Activated B cell treated with CpG ODN at 0.5 μM for 24 hours (primary cell): ENCODE measurements at regions of chr20 and their contacts with region 1.

Region 1: GRCh38 chr20:37384683-37385174 is 38.8 kb downstream of the SRC start:
- DNase-seq: peak; percentile 87
- ATAC-seq: peak; percentile 59
- H3K4me3 Mint-ChIP-seq: peak overlapping the region; percentile 80
- H3K27ac Mint-ChIP-seq: peak overlapping the region; percentile 82
- H3K4me1 Mint-ChIP-seq: peaks cover 47% of the 10 kb centered on the region
- H3K27me3 Mint-ChIP-seq: no peaks in the 10 kb centered on the region
- CTCF ChIP-seq: peak; percentile 77

Region 2: GRCh38 chr20:37202267-37202943 is 182.3 kb before region 1 on chr20:
- CTCF ChIA-PET with region 1: interaction called, 4 read pairs
- POLR2A ChIA-PET with region 1: no interaction called
- intact Hi-C with region 1: loop called (anchors 2 kb)
- DNase-seq: no peak
- ATAC-seq: no peak
- H3K4me3 Mint-ChIP-seq: no peak overlapping the region
- H3K27ac Mint-ChIP-seq: no peak overlapping the region
- H3K4me1 Mint-ChIP-seq: no peaks in the 10 kb centered on the region
- H3K27me3 Mint-ChIP-seq: no peaks in the 10 kb centered on the region
- CTCF ChIP-seq: peak; percentile 66

Region 3: DNA sequence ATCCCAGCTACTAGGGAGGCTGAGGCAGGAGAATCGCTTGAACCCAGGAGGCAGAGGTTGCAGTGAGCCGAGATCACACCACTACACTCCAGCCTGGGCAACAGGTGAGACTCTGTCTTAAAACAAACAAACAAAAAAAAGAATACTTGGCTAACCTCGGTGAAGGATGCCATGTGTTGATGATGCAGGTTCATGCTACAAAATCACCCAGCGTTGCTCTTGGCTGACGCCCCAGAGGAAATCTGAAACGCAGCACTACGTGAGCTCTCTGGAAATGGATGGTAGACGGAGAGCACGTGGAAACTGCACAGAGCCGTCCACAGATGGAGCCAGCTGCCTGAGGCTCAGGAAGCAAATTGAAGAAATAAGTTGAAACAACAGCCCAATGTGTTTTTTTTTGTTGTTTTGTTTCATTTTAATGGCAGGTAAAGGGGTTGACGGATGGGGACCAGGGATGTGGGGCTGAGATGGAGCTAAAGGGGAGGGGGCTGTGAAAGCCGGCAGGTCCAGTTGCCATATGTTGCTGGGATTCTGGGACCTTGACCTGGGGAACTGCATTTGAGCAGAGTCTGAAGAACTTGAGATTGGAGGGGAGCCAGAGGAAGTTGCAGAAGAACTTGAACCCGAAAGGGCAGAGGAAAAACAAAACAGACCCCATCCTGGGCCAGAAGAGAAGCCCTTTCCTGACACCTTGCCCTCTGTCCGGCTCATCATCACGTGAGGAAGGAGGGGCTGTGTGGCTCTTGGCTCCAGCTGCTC is 108.1 kb before region 1 on chr20:
- CTCF ChIA-PET with region 1: interaction called, 59 read pairs
- POLR2A ChIA-PET with region 1: interaction called, 8 read pairs
- intact Hi-C with region 1: no loop called
- DNase-seq: no peak
- ATAC-seq: peak; percentile 69
- H3K4me3 Mint-ChIP-seq: peak overlapping the region; percentile 39
- H3K27ac Mint-ChIP-seq: peak overlapping the region; percentile 81
- H3K4me1 Mint-ChIP-seq: peaks cover 47% of the 10 kb centered on the region
- H3K27me3 Mint-ChIP-seq: no peaks in the 10 kb centered on the region
- CTCF ChIP-seq: no peak

Region 4: DNA sequence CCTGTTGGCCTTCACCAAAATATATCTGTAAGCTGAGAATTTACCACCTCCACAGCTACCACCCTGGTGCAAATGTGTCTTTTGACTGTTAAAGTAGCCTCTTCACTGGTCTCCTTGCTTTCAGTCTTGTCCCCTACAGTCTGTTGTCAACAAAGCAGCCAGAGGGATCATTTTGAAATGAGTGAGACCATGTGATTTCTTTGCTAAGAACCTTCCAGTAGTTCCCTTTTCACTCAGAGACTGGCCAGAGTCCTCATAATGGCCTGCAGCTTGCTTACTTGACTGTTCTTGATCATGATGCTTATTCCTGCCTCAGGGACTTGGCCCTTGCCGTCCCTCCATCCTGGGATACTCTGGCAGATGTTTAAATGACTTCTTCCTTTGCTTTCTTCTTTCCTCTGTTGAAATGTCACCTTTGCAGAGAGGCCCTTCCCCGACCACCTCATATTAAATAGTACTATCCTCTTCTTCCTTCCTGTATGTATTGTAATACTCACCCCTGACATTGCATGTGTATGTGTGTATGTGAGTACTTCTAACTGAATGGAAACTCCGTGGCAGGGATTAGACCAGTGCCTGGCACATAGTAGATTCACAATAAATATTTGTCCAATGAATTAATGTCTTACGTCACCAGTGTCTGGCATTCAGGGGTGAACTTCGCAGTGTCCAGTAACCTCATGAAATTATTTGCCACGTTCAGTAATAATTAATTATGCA is 90.3 kb before region 1 on chr20:
- CTCF ChIA-PET with region 1: interaction called, 13 read pairs
- POLR2A ChIA-PET with region 1: interaction called, 6 read pairs
- intact Hi-C with region 1: loop called (anchors 1 kb)
- DNase-seq: no peak
- ATAC-seq: no peak
- H3K4me3 Mint-ChIP-seq: no peak overlapping the region
- H3K27ac Mint-ChIP-seq: peak overlapping the region; percentile 15
- H3K4me1 Mint-ChIP-seq: peaks cover 62% of the 10 kb centered on the region
- H3K27me3 Mint-ChIP-seq: no peaks in the 10 kb centered on the region
- CTCF ChIP-seq: no peak

Region 5: GRCh38 chr20:37365760-37366638 is 18.7 kb before region 1 on chr20:
- CTCF ChIA-PET with region 1: interaction called, 6 read pairs
- POLR2A ChIA-PET with region 1: interaction called, 21 read pairs
- intact Hi-C with region 1: loop called (anchors 1 kb)
- DNase-seq: no peak
- ATAC-seq: peak; percentile 88
- H3K4me3 Mint-ChIP-seq: peak overlapping the region; percentile 49
- H3K27ac Mint-ChIP-seq: peak overlapping the region; percentile 80
- H3K4me1 Mint-ChIP-seq: peaks cover 45% of the 10 kb centered on the region
- H3K27me3 Mint-ChIP-seq: no peaks in the 10 kb centered on the region
- CTCF ChIP-seq: no peak

Region 6: DNA sequence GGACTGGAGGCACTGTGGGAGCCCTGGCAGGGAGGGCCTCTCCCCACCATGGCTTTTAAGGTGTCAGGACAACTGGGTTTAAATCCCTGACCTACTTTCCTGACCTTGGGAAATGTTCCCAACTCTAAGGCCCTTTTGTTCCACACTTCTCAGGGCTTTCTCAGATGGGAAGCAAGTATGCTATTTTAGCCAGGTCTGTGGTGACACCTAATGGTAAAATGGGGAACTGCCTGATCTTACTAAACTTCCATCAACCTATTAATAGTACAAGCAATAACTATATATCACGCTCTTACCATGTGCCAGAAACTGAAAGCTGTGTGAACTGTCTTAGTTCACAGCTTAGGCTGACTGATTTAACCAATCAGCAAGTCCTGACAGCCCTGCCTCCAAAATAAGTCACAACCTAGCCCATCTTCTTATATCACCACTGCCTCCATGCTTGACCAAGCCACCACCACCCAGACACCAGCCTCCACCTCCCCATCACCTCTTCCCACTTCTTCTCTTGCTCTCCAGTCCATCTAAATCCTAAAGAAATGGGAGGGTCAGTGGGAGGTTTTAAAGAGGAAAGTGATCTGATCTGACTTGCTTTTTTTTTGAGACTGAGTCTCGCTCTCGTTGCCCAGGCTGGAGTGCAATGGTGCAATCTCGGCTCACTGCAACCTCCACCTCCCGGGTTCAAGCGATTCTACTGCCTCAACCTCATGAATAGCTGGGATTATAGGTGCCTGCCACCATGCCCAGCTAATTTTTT is 149.8 kb after region 1 on chr20:
- CTCF ChIA-PET with region 1: interaction called, 6 read pairs
- POLR2A ChIA-PET with region 1: interaction called, 3 read pairs
- intact Hi-C with region 1: loop called (anchors 1 kb)
- DNase-seq: no peak
- ATAC-seq: peak; percentile 99
- H3K4me3 Mint-ChIP-seq: no peak overlapping the region
- H3K27ac Mint-ChIP-seq: peak overlapping the region; percentile 38
- H3K4me1 Mint-ChIP-seq: peaks cover 9% of the 10 kb centered on the region
- H3K27me3 Mint-ChIP-seq: peaks cover 10% of the 10 kb centered on the region
- CTCF ChIP-seq: peak; percentile 38

Region 7: GRCh38 chr20:38073307-38074071 is 688.8 kb after region 1 on chr20:
- CTCF ChIA-PET with region 1: no interaction called
- POLR2A ChIA-PET with region 1: no interaction called
- intact Hi-C with region 1: no loop called
- DNase-seq: no peak
- ATAC-seq: peak; percentile 55
- H3K4me3 Mint-ChIP-seq: peak overlapping the region; percentile 22
- H3K27ac Mint-ChIP-seq: peak overlapping the region; percentile 65
- H3K4me1 Mint-ChIP-seq: peaks cover 56% of the 10 kb centered on the region
- H3K27me3 Mint-ChIP-seq: no peaks in the 10 kb centered on the region
- CTCF ChIP-seq: peak; percentile 34